ENCODE measurements at regions of chr2 and their contacts with region 1.

Region 1: GRCh38 chr2:55111570-55112228 is 61.4 kb upstream of the RTN4 start:
- DNase-seq: peak; percentile 74
- ATAC-seq: peak; percentile 84
- H3K4me3 ChIP-seq: peak overlapping the region; percentile 2 to 38; a peak in 2 of 4 replicates
- H3K27ac ChIP-seq: peak overlapping the region; percentile 59
- H3K4me1 ChIP-seq: peaks cover 43 to 73% of the 10 kb centered on the region in 2 experiments
- H3K27me3 ChIP-seq: no peaks in the 10 kb centered on the region
- CTCF ChIP-seq: no peak
- POLR2A ChIP-seq: no peak
- RAD21 ChIP-seq: no peak

Region 2: DNA sequence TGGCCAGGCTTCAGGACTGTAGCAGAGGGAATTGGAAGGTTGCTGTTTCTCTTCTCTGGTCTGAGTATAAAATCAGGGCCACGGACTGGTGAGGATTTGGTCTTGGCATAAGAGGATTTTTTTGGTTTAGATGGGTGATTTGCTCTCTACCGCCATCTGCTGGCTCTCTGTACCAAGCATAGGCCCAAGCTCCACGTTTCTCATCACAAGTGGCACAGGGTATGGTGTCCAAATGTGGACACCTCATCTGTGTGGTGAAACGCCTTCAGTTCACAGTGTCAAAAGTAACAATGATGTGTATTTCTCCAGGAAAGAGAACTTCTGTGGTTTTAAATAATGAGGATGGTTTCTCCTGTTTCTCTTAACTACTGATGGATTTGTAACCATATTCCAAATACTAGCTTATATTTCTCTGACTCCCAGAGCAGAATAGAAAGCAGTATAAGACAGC is 273.1 kb before region 1 on chr2:
- CTCF ChIA-PET with region 1: no interaction called
- POLR2A ChIA-PET with region 1: no interaction called
- RAD21 ChIA-PET with region 1: no interaction called
- intact Hi-C with region 1: no loop called
- DNase-seq: peak; percentile 46
- ATAC-seq: peak; percentile 94
- H3K4me3 ChIP-seq: no peak overlapping the region
- H3K27ac ChIP-seq: no peak overlapping the region
- H3K4me1 ChIP-seq: no peaks in the 10 kb centered on the region
- H3K27me3 ChIP-seq: no peaks in the 10 kb centered on the region
- CTCF ChIP-seq: peak; percentile 76 to 95 (median 89)
- POLR2A ChIP-seq: no peak
- RAD21 ChIP-seq: peak; percentile 77

Region 3: GRCh38 chr2:55093381-55093780 is 18.3 kb before region 1 on chr2:
- CTCF ChIA-PET with region 1: no interaction called
- POLR2A ChIA-PET with region 1: interaction called, 10 read pairs
- RAD21 ChIA-PET with region 1: no interaction called
- intact Hi-C with region 1: no loop called
- DNase-seq: peak; percentile 38
- ATAC-seq: peak; percentile 89
- H3K4me3 ChIP-seq: peak overlapping the region in 1 of 2 experiments; percentile 48; a peak in 2 of 4 replicates
- H3K27ac ChIP-seq: peak overlapping the region; percentile 23; the same call in 1 of the 2 replicates
- H3K4me1 ChIP-seq: peaks cover 9 to 38% of the 10 kb centered on the region in 2 experiments
- H3K27me3 ChIP-seq: no peaks in the 10 kb centered on the region
- CTCF ChIP-seq: no peak
- POLR2A ChIP-seq: no peak
- RAD21 ChIP-seq: no peak